CD14-positive monocyte (primary cell): ENCODE measurements at regions of chr2 and their contacts with region 1.

Region 1: GRCh38 chr2:134897932-134898331 is 20.7 kb upstream of the CCNT2 start:
- DNase-seq: no peak
- H3K4me3 ChIP-seq: no peak overlapping the region
- H3K4me3 Mint-ChIP-seq: no peak overlapping the region
- H3K27ac ChIP-seq: no peak overlapping the region
- H3K27ac Mint-ChIP-seq: no peak overlapping the region
- H3K4me1 ChIP-seq: no peaks in the 10 kb centered on the region
- H3K4me1 Mint-ChIP-seq: no peaks in the 10 kb centered on the region
- H3K27me3 ChIP-seq: no peaks in the 10 kb centered on the region
- H3K27me3 Mint-ChIP-seq: peaks cover 0 to 2% (median 0%) of the 10 kb centered on the region in 3 donors
- CTCF ChIP-seq: peak; percentile 66

Region 2: DNA sequence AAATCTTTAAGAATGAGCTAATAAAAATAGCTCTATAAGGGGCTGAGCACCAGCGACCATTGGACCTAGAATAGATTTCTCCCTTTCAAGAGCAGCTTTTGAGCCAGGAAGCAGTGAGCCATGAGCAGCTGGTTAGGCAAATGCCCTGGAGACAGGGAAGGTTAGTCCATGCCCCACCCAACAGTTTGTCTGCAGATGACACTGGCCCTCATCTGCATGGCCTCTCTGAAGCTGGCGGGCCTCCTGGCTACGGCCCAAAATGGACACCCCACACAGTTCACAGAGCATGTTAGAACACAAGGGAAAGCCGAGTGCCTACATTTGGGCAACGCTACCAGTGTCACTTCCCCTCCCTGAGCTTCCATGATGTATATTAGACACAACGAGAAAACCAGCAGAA is 443.0 kb before region 1 on chr2:
- intact Hi-C with region 1: loop called (anchors 2 to 5 kb)
- DNase-seq: no peak
- H3K4me3 ChIP-seq: no peak overlapping the region
- H3K4me3 Mint-ChIP-seq: no peak overlapping the region
- H3K27ac ChIP-seq: no peak overlapping the region
- H3K27ac Mint-ChIP-seq: no peak overlapping the region
- H3K4me1 ChIP-seq: no peaks in the 10 kb centered on the region
- H3K4me1 Mint-ChIP-seq: no peaks in the 10 kb centered on the region
- H3K27me3 ChIP-seq: no peaks in the 10 kb centered on the region
- H3K27me3 Mint-ChIP-seq: peaks cover under 1 to 4% (median 1%) of the 10 kb centered on the region in 3 donors
- CTCF ChIP-seq: no peak

Region 3: GRCh38 chr2:134736167-134736880 is 161.6 kb before region 1 on chr2:
- intact Hi-C with region 1: no loop called
- DNase-seq: peak; percentile 64 to 94 (median 81)
- H3K4me3 ChIP-seq: peak overlapping the region in 1 of 3 experiments; percentile 1
- H3K4me3 Mint-ChIP-seq: no peak overlapping the region
- H3K27ac ChIP-seq: peak overlapping the region; percentile 64 to 80
- H3K27ac Mint-ChIP-seq: peak overlapping the region; percentile 86 to 94 (median 93)
- H3K4me1 ChIP-seq: peaks cover 54 to 56% of the 10 kb centered on the region in 2 donors
- H3K4me1 Mint-ChIP-seq: peaks cover 54% of the 10 kb centered on the region
- H3K27me3 ChIP-seq: no peaks in the 10 kb centered on the region
- H3K27me3 Mint-ChIP-seq: peaks cover 0 to 5% (median 2%) of the 10 kb centered on the region in 3 donors
- CTCF ChIP-seq: no peak